ENCODE measurements at regions of chr18 and their contacts with region 1.

Region 1: GRCh38 chr18:812376-813171 is 532 bp upstream of the YES1 start:
- DNase-seq: peak; percentile 85
- ATAC-seq: peak; percentile 65
- H3K4me3 Mint-ChIP-seq: peak overlapping the region; percentile 87
- H3K27ac Mint-ChIP-seq: peak overlapping the region; percentile 99
- H3K4me1 Mint-ChIP-seq: peaks cover 58% of the 10 kb centered on the region
- H3K27me3 Mint-ChIP-seq: no peaks in the 10 kb centered on the region

Region 2: GRCh38 chr18:158128-159036 is 654.2 kb before region 1 on chr18 and contains the start of gene USP14:
- CTCF ChIA-PET with region 1: no interaction called
- POLR2A ChIA-PET with region 1: no interaction called
- intact Hi-C with region 1: loop called in 1 of 2 experiments (anchors 1 kb)
- DNase-seq: peak; percentile 99
- ATAC-seq: peak; percentile 97
- H3K4me3 Mint-ChIP-seq: peak within 1 kb of the TSS; percentile 89
- H3K27ac Mint-ChIP-seq: peak within 1 kb of the TSS; percentile 87
- H3K4me1 Mint-ChIP-seq: peaks cover 31% of the 10 kb centered on the region
- H3K27me3 Mint-ChIP-seq: no peaks in the 10 kb centered on the region
- total RNA-seq, gene USP14: 94.7 to 101 TPM

Region 3: DNA sequence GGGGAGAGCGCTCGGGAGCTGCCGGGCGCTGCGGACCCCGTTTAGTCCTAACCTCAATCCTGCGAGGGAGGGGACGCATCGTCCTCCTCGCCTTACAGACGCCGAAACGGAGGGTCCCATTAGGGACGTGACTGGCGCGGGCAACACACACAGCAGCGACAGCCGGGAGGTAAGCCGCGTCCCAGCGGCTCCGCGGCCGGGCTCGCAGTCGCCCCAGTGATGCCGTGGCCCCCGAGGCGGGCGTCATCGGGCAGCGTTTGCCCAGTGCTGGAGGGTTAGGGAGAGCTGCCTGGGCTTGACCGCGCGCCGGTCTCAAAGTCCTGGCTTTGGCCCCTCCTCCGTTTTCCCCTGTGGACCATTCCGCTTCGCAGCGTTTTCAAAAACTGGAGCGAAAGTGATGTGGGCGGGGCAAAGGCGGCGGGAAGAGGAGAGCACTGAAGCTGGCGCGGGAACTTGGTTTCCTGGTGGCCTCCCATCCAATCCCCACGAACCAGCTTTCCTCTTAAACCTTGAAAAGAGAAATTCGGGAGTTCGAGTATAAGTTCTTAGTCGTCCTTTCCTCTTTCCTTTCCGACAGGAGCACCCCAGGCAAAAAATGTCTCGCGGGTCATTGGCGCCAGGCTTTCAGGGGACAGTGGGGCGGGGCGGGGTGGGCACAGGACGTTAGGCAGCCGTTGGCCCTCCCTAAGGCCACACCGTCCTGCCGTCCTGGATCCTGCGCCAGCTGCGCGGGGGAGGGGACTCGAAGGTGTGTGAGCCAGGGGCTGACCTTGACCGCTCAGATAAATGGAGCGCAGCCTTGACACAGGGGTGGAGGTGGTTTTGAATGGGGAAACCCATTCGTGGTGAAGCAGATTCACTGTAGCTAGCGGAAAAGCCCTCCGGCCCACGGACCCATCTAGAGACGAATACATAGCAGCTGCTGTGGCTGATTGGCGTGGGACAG is 154.3 kb before region 1 on chr18:
- CTCF ChIA-PET with region 1: interaction called, 3 read pairs
- POLR2A ChIA-PET with region 1: interaction called, 3 read pairs
- intact Hi-C with region 1: loop called (anchors 1 kb)
- DNase-seq: peak; percentile 85
- ATAC-seq: peak; percentile 65
- H3K4me3 Mint-ChIP-seq: peak overlapping the region; percentile 93
- H3K27ac Mint-ChIP-seq: peak overlapping the region; percentile 90
- H3K4me1 Mint-ChIP-seq: peaks cover 12% of the 10 kb centered on the region
- H3K27me3 Mint-ChIP-seq: peaks cover 20% of the 10 kb centered on the region

Region 4: GRCh38 chr18:712401-713134 is 100.0 kb before region 1 on chr18 and contains the start of gene ENOSF1:
- CTCF ChIA-PET with region 1: interaction called, 9 read pairs
- POLR2A ChIA-PET with region 1: interaction called, 4 read pairs
- intact Hi-C with region 1: loop called (anchors 1 kb)
- DNase-seq: peak; percentile 95
- ATAC-seq: peak; percentile 91
- H3K4me3 Mint-ChIP-seq: peak within 1 kb of the TSS; percentile 94
- H3K27ac Mint-ChIP-seq: peak within 1 kb of the TSS; percentile 99
- H3K4me1 Mint-ChIP-seq: peaks cover 53% of the 10 kb centered on the region
- H3K27me3 Mint-ChIP-seq: no peaks in the 10 kb centered on the region
- total RNA-seq, gene ENOSF1: 92.6 to 97.4 TPM

Region 5: GRCh38 chr18:725646-726045 is 86.9 kb before region 1 on chr18:
- CTCF ChIA-PET with region 1: no interaction called
- POLR2A ChIA-PET with region 1: no interaction called
- intact Hi-C with region 1: no loop called
- DNase-seq: no peak
- ATAC-seq: no peak
- H3K4me3 Mint-ChIP-seq: no peak overlapping the region
- H3K27ac Mint-ChIP-seq: no peak overlapping the region
- H3K4me1 Mint-ChIP-seq: no peaks in the 10 kb centered on the region
- H3K27me3 Mint-ChIP-seq: no peaks in the 10 kb centered on the region

Region 6: GRCh38 chr18:1037776-1038175 is 225.2 kb after region 1 on chr18:
- CTCF ChIA-PET with region 1: no interaction called
- POLR2A ChIA-PET with region 1: no interaction called
- intact Hi-C with region 1: no loop called
- DNase-seq: no peak
- ATAC-seq: no peak
- H3K4me3 Mint-ChIP-seq: no peak overlapping the region
- H3K27ac Mint-ChIP-seq: no peak overlapping the region
- H3K4me1 Mint-ChIP-seq: no peaks in the 10 kb centered on the region
- H3K27me3 Mint-ChIP-seq: no peaks in the 10 kb centered on the region

Region 7: GRCh38 chr18:2641638-2642037 is 1829.1 kb after region 1 on chr18:
- CTCF ChIA-PET with region 1: no interaction called
- POLR2A ChIA-PET with region 1: no interaction called
- intact Hi-C with region 1: loop called in 1 of 2 experiments (anchors 5 kb)
- DNase-seq: no peak
- ATAC-seq: peak; percentile 71
- H3K4me3 Mint-ChIP-seq: peak overlapping the region; percentile 63
- H3K27ac Mint-ChIP-seq: no peak overlapping the region
- H3K4me1 Mint-ChIP-seq: peaks cover 51% of the 10 kb centered on the region
- H3K27me3 Mint-ChIP-seq: no peaks in the 10 kb centered on the region